Activated CD8-positive, alpha-beta T cell treated with anti-CD3 and anti-CD28 coated beads for 36 hours (primary cell): ENCODE measurements at regions of chr11 and their contacts with region 1.

Region 1: GRCh38 chr11:58579192-58580129 is 598 bp downstream of the ZFP91 start:
- DNase-seq: peak; percentile 96
- ATAC-seq: peak; percentile 29
- H3K4me3 Mint-ChIP-seq: peak overlapping the region; percentile 93
- H3K27ac Mint-ChIP-seq: peak overlapping the region; percentile 100
- H3K4me1 Mint-ChIP-seq: peaks cover 36% of the 10 kb centered on the region
- H3K27me3 Mint-ChIP-seq: no peaks in the 10 kb centered on the region
- CTCF ChIP-seq: peak; percentile 67

Region 2: GRCh38 chr11:58471892-58472291 is 107.6 kb before region 1 on chr11:
- CTCF ChIA-PET with region 1: no interaction called
- POLR2A ChIA-PET with region 1: no interaction called
- intact Hi-C with region 1: no loop called
- DNase-seq: no peak
- ATAC-seq: no peak
- H3K4me3 Mint-ChIP-seq: no peak overlapping the region
- H3K27ac Mint-ChIP-seq: no peak overlapping the region
- H3K4me1 Mint-ChIP-seq: no peaks in the 10 kb centered on the region
- H3K27me3 Mint-ChIP-seq: peaks cover 5% of the 10 kb centered on the region
- CTCF ChIP-seq: no peak

Region 3: GRCh38 chr11:58524232-58525036 is 55.0 kb before region 1 on chr11:
- CTCF ChIA-PET with region 1: interaction called, 3 read pairs
- POLR2A ChIA-PET with region 1: interaction called, 11 read pairs
- intact Hi-C with region 1: no loop called
- DNase-seq: peak; percentile 61
- ATAC-seq: peak; percentile 59
- H3K4me3 Mint-ChIP-seq: peak overlapping the region; percentile 72
- H3K27ac Mint-ChIP-seq: peak overlapping the region; percentile 96
- H3K4me1 Mint-ChIP-seq: peaks cover 62% of the 10 kb centered on the region
- H3K27me3 Mint-ChIP-seq: no peaks in the 10 kb centered on the region
- CTCF ChIP-seq: peak; percentile 90

Region 4: GRCh38 chr11:58597486-58598144 is 18.2 kb after region 1 on chr11:
- CTCF ChIA-PET with region 1: interaction called, 6 read pairs
- POLR2A ChIA-PET with region 1: interaction called, 22 read pairs
- intact Hi-C with region 1: no loop called
- DNase-seq: no peak
- ATAC-seq: peak; percentile 87
- H3K4me3 Mint-ChIP-seq: no peak overlapping the region
- H3K27ac Mint-ChIP-seq: peak overlapping the region; percentile 43
- H3K4me1 Mint-ChIP-seq: peaks cover 85% of the 10 kb centered on the region
- H3K27me3 Mint-ChIP-seq: no peaks in the 10 kb centered on the region
- CTCF ChIP-seq: no peak

Region 5: DNA sequence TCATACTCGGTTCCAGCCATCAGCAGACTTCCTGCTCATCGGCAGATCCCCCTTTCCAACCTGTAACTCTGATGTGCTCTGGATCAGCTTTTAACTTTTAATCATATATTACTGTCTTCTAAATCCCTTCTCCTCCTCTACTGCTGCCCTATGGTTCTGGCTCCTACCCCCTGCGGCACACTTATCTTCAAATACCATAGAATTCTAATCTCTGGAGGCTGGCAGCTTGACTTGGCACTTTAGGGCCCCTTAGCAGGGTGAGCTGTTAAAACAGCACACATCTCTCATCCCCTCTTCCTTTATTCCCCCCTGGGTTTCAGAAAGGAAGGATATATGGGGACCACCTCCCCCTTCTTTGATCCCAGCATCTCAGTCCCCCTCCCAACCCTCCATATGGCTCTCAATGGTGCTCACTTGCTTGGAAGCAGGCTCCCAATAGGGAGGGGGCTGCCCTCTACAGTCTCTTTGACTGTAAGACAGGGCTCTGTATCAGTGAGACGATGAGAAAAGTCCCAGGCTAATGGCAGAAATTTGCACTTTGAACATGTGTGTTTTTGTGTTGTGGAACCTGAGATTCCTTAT is 38.6 kb after region 1 on chr11:
- CTCF ChIA-PET with region 1: interaction called, 4 read pairs
- POLR2A ChIA-PET with region 1: interaction called, 4 read pairs
- intact Hi-C with region 1: loop called (anchors 5 kb)
- DNase-seq: peak; percentile 15
- ATAC-seq: peak; percentile 67
- H3K4me3 Mint-ChIP-seq: no peak overlapping the region
- H3K27ac Mint-ChIP-seq: peak overlapping the region; percentile 27
- H3K4me1 Mint-ChIP-seq: peaks cover 32% of the 10 kb centered on the region
- H3K27me3 Mint-ChIP-seq: no peaks in the 10 kb centered on the region
- CTCF ChIP-seq: peak; percentile 17

Region 6: GRCh38 chr11:58675334-58676155 is 96.1 kb after region 1 on chr11:
- CTCF ChIA-PET with region 1: interaction called, 5 read pairs
- POLR2A ChIA-PET with region 1: no interaction called
- intact Hi-C with region 1: loop called (anchors 10 kb)
- DNase-seq: peak; percentile 84
- ATAC-seq: peak; percentile 86
- H3K4me3 Mint-ChIP-seq: no peak overlapping the region
- H3K27ac Mint-ChIP-seq: no peak overlapping the region
- H3K4me1 Mint-ChIP-seq: no peaks in the 10 kb centered on the region
- H3K27me3 Mint-ChIP-seq: peaks cover 2% of the 10 kb centered on the region
- CTCF ChIP-seq: peak; percentile 95